ENCODE measurements at regions of chr19 and their contacts with region 1.

Region 1: DNA sequence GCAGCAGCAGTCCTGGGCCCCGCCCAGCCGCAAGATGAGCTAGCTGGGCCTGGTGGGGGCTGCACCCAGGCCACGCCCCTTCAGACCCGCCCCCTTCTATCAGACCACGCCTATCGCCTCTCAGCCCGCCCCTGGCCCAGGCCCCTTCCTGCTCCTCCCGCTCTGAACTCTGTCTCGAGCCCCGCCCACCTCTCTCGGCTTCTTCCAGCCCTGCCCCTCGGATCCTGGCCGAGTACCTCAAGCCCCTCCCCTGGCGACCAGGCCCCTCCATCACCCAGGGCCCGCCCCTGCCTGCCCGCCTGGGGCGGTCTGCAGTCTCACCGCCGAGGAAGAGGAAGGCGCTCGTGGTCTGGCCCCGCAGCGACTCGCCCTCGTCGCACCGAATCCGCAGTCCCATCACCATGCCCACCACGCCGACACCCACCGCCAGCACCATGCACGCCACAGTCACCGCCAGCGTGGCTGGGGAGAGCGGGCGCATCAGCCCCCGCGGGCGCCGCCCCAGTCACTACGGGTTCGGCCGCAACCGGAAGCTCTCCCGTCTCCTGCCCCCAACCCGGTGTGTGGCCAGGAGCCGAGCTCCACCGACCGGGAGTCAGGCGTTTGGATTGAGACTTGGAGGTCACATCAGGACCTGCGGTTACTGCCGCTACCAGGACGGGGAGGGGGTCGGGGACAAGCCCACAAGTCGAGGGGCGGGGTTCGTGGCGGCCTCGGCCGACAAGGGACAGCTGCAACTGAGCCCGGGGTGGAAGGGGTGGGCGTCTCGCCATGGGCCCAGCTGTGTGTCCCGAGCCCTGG is 1.0 kb downstream of the CLDND2 start:
- DNase-seq: peak; percentile 98
- ATAC-seq: peak; percentile 90
- H3K4me3 ChIP-seq: peak overlapping the region; percentile 84
- H3K27ac ChIP-seq: peak overlapping the region; percentile 97
- H3K4me1 ChIP-seq: peaks cover 14% of the 10 kb centered on the region
- H3K27me3 ChIP-seq: no peaks in the 10 kb centered on the region; the same call in 1 of the 2 replicates
- CTCF ChIP-seq: no peak
- POLR2A ChIP-seq: peak; percentile 57; the same call in 1 of the 2 replicates
- RAD21 ChIP-seq: no peak

Region 2: GRCh38 chr19:51393959-51394836 is 26.4 kb after region 1 on chr19:
- CTCF ChIA-PET with region 1: no interaction called
- POLR2A ChIA-PET with region 1: no interaction called
- dilution Hi-C with region 1: no loop called
- in situ Hi-C with region 1: no loop called
- intact Hi-C with region 1: loop called (anchors 1 kb)
- DNase-seq: peak; percentile 99
- ATAC-seq: peak; percentile 98
- H3K4me3 ChIP-seq: peak overlapping the region; percentile 56
- H3K27ac ChIP-seq: peak overlapping the region; percentile 71
- H3K4me1 ChIP-seq: no peaks in the 10 kb centered on the region
- H3K27me3 ChIP-seq: no peaks in the 10 kb centered on the region
- CTCF ChIP-seq: no peak
- POLR2A ChIP-seq: 0 out of 2 replicates have a peak, but pooled peaks have one; percentile 46
- RAD21 ChIP-seq: no peak

Region 3: GRCh38 chr19:51621178-51621577 is 253.4 kb after region 1 on chr19:
- CTCF ChIA-PET with region 1: no interaction called
- POLR2A ChIA-PET with region 1: no interaction called
- dilution Hi-C with region 1: no loop called
- in situ Hi-C with region 1: no loop called
- intact Hi-C with region 1: no loop called
- DNase-seq: no peak
- ATAC-seq: no peak
- H3K4me3 ChIP-seq: no peak overlapping the region
- H3K27ac ChIP-seq: no peak overlapping the region
- H3K4me1 ChIP-seq: no peaks in the 10 kb centered on the region
- H3K27me3 ChIP-seq: no peaks in the 10 kb centered on the region
- CTCF ChIP-seq: no peak
- POLR2A ChIP-seq: no peak
- RAD21 ChIP-seq: no peak